CD4-positive, alpha-beta memory T cell (primary cell): ENCODE measurements at regions of chr2 and their contacts with region 1.

Region 1: DNA sequence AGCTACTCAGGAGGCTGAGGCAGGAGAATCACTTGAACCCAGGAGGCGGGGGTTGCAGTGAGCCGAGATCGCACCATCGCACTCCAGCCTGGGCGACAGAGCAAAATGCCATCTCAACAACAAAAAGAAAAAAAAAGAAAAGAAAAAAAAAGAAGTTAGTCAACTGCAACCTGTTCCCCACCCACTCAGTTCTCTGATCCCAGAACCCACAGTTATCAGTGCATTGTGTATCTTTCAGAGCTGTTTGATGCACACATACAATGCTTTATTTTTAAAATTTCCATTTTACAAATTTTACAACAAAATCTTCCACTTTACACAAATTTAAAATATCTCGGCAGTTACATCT is 14.0 kb downstream of the RNU2-63P start:
- DNase-seq: no peak
- H3K4me3 ChIP-seq: no peak overlapping the region
- H3K4me3 Mint-ChIP-seq: no peak overlapping the region
- H3K27ac ChIP-seq: no peak overlapping the region
- H3K27ac Mint-ChIP-seq: no peak overlapping the region
- H3K4me1 ChIP-seq: peaks cover 7% of the 10 kb centered on the region
- H3K4me1 Mint-ChIP-seq: peaks cover 2 to 7% (median 5%) of the 10 kb centered on the region in 4 donors
- H3K27me3 ChIP-seq: no peaks in the 10 kb centered on the region
- H3K27me3 Mint-ChIP-seq: no peaks in the 10 kb centered on the region

Region 2: DNA sequence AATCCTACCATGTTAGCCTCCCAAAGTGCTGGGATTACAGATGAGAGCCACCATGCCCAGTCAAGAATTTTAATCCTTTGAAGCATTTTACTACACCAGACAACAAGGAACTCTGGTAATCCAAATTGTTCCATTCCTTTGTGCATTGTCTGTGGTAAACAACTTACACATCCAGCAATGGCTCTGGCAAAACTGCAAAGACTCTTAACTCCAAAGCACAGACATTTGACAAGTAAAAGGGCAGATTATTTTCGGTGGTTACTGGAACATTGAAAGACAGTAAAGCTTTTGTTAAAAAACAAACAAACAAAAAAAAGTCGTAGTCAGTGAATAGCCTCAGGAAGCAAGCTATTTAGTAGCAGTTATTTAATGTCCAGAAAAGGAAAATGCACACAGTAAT is 1315.4 kb before region 1 on chr2:
- CTCF ChIA-PET with region 1: no interaction called
- POLR2A ChIA-PET with region 1: no interaction called
- intact Hi-C with region 1: no loop called
- DNase-seq: no peak
- H3K4me3 ChIP-seq: no peak overlapping the region
- H3K4me3 Mint-ChIP-seq: no peak overlapping the region
- H3K27ac ChIP-seq: no peak overlapping the region
- H3K27ac Mint-ChIP-seq: no peak overlapping the region
- H3K4me1 ChIP-seq: no peaks in the 10 kb centered on the region
- H3K4me1 Mint-ChIP-seq: no peaks in the 10 kb centered on the region
- H3K27me3 ChIP-seq: no peaks in the 10 kb centered on the region
- H3K27me3 Mint-ChIP-seq: peaks cover 1 to 5% of the 10 kb centered on the region in 2 donors

Region 3: DNA sequence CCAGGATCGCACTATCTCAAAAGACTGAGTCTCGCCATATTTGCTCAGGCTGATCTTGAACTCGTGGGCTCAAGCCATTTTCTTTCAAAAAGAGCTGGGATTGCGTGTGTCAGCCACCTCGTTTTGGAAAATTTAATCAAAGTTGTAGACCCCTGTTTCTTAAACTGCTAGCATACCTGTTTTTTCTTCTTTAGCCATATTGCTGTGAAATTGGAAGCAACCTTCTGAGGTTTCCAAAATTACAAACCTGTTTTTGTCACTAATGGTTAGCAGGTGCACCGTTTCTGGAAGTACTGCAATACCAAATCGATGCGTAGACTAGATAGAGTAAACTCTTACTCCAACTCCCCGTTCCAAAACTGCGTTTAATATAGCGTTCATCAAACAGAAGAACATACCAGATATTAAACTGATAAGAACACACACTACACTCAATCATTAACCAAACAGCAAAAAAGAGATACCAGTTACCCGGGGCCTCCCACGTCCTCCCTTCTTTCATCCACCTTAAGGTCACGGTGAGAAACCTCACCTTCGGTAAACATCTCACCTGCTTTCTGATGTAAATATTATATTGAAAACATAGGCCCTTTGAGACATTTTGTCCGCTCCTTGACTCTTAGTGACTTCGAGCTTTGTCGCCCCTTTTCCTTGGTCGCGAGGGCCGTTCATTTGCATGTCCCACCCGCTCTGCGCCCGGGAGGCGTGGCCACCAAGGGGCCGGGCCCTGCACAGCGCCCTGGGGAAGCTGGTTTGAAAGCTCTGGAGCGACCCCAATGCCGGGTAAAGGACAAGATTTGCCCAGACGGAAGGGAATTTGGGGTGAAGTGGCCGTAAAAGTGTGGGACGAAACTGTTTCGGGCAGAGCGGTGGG is 14.0 kb after region 1 on chr2 and contains the start of gene RNU2-63P:
- CTCF ChIA-PET with region 1: interaction called, 14 read pairs
- POLR2A ChIA-PET with region 1: interaction called, 8 read pairs
- intact Hi-C with region 1: no loop called
- DNase-seq: peak; percentile 79 to 90 (median 85)
- H3K4me3 ChIP-seq: peak within 1 kb of the TSS; percentile 88 to 97
- H3K4me3 Mint-ChIP-seq: peak within 1 kb of the TSS; percentile 97 to 100 (median 98)
- H3K27ac ChIP-seq: peak within 1 kb of the TSS; percentile 87
- H3K27ac Mint-ChIP-seq: peak within 1 kb of the TSS; percentile 99 to 100 (median 99)
- H3K4me1 ChIP-seq: peaks cover 12% of the 10 kb centered on the region
- H3K4me1 Mint-ChIP-seq: peaks cover 13 to 26% (median 19%) of the 10 kb centered on the region in 4 donors
- H3K27me3 ChIP-seq: no peaks in the 10 kb centered on the region
- H3K27me3 Mint-ChIP-seq: no peaks in the 10 kb centered on the region
- total RNA-seq, gene RNU2-63P: 4.3 TPM in 1 of 2 experiments, not detected in the other

Region 4: GRCh38 chr2:88400037-88400767 is 397.9 kb after region 1 on chr2:
- CTCF ChIA-PET with region 1: no interaction called
- POLR2A ChIA-PET with region 1: no interaction called
- intact Hi-C with region 1: no loop called
- DNase-seq: no peak
- H3K4me3 ChIP-seq: no peak overlapping the region
- H3K4me3 Mint-ChIP-seq: no peak overlapping the region
- H3K27ac ChIP-seq: no peak overlapping the region
- H3K27ac Mint-ChIP-seq: no peak overlapping the region
- H3K4me1 ChIP-seq: no peaks in the 10 kb centered on the region
- H3K4me1 Mint-ChIP-seq: no peaks in the 10 kb centered on the region
- H3K27me3 ChIP-seq: peaks cover 5% of the 10 kb centered on the region
- H3K27me3 Mint-ChIP-seq: peaks cover 7 to 17% of the 10 kb centered on the region in 2 donors